Common myeloid progenitor, CD34-positive (primary cell): ENCODE measurements at regions of chr14 and their contacts with region 1.

Region 1: GRCh38 chr14:53325176-53325806 is 172.2 kb upstream of the DDHD1 start:
- DNase-seq: peak in 2 of 3 donors; percentile 16 to 24
- H3K4me3 ChIP-seq: no peak overlapping the region
- H3K27ac ChIP-seq: no peak overlapping the region
- H3K4me1 ChIP-seq: no peaks in the 10 kb centered on the region
- H3K27me3 ChIP-seq: no peaks in the 10 kb centered on the region

Region 2: DNA sequence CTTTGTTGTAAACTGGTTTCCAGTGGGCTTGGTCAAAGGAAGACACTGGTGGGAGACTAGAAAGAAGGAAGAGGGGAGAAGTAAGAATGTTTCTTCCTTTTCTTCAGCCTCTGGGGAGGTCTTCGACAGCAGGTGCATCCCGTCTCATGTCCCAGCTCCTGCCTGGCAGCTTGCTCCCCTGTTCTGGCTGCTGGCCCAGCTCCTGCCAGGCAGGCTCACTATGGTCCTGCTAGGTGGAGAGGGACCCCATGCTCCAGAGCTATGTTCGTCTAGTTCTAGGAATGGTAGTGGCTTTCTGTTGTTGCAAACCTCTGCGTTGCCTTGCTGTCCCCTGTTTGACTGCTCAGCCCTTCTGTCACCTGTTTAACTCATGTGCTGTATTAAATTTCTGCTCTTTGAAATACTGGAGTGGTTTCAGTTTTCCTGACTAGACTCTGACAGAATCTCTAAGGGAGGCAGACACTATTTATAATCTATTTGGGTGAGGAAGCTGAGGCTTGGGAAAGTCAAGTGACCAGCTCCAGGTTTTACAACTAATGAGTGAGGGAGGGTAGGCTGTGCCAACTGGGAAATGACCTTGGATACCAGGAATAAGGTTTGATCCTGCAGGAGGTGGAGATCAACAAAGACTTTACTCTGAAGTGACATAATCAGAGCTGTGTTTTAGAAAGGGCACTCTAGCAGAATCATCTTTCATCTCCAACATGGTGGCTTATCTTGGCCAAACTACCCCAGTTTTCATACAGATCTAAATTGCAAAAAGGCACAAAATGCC is 77.5 kb before region 1 on chr14:
- CTCF ChIA-PET with region 1: no interaction called
- POLR2A ChIA-PET with region 1: no interaction called
- DNase-seq: no peak
- H3K4me3 ChIP-seq: no peak overlapping the region
- H3K27ac ChIP-seq: no peak overlapping the region
- H3K4me1 ChIP-seq: no peaks in the 10 kb centered on the region
- H3K27me3 ChIP-seq: no peaks in the 10 kb centered on the region

Region 3: DNA sequence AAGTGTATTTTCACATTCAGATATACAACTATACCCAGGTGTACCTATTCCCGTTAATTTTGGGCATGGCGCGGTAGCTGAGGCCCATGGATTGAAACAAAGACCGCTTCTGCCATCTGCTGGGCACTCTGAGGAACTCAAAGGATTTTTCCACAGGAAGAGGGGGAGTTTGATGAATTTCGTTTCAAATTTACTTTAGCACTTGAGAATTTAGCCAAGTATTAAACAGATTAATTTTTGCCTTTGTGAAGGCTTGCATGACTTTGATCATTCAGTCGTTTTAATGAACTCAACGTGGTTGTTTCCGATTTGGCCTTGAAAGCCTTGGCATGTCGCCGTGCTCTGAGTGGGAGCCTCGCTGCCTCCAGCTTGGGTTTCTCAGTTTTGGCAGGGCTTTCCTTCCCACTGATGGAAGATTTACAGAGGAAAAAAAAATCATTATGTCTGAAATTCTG is 19.0 kb before region 1 on chr14:
- CTCF ChIA-PET with region 1: interaction called, 19 read pairs
- POLR2A ChIA-PET with region 1: no interaction called
- DNase-seq: peak; percentile 46 to 67 (median 60)
- H3K4me3 ChIP-seq: peak overlapping the region in 6 of 7 experiments; percentile 52 to 83 (median 66)
- H3K27ac ChIP-seq: no peak overlapping the region
- H3K4me1 ChIP-seq: peaks cover 0 to 8% (median 3%) of the 10 kb centered on the region in 4 experiments
- H3K27me3 ChIP-seq: no peaks in the 10 kb centered on the region

Region 4: GRCh38 chr14:53338192-53338591 is 12.9 kb after region 1 on chr14:
- CTCF ChIA-PET with region 1: no interaction called
- POLR2A ChIA-PET with region 1: no interaction called
- DNase-seq: no peak
- H3K4me3 ChIP-seq: no peak overlapping the region
- H3K27ac ChIP-seq: no peak overlapping the region
- H3K4me1 ChIP-seq: no peaks in the 10 kb centered on the region
- H3K27me3 ChIP-seq: no peaks in the 10 kb centered on the region